Psoas muscle (tissue), 8 donors: ENCODE measurements at regions of chr9 and their contacts with region 1.

Region 1: DNA sequence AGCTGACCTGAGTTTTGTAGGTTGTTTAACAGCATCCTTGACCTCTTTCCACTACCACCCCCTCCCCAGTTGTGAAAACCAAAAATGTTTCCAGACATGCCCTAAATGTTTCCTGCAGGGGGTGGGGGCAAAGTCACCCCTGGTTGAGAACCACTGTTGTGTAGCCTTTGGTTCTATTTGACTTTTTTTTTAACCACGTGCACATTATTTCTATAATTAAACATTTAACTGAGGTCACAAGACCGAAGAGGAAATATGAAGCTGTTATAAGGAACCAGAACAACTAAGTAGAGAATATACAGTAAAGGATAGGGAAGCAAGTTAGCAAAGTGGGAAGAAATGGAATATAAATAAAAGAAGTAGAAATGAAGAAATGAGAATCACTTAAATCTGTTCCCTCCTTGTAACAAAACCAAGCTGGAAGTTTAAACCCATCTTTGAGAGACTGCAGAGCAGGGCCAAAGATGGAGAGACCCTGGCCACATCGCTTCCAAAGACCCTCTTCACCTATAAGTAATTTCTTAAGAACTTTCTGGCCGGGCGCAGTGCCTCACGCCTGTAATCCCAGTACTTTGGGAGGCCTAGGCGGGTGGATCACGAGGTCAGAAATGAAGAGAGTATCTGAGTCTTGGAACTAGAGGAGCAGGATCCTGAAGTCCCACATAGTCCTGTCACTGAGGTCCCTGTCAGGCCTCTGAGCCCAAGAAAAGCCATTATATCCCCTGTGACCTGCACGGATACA is 14.4 kb downstream of the SIT1 start:
- DNase-seq: no peak
- ATAC-seq: no peak
- H3K4me3 ChIP-seq: no peak overlapping the region
- H3K27ac ChIP-seq: peak overlapping the region; percentile 16
- H3K4me1 ChIP-seq: no peaks in the 10 kb centered on the region
- H3K27me3 ChIP-seq: no peaks in the 10 kb centered on the region
- CTCF ChIP-seq: no peak

Region 2: GRCh38 chr9:36298586-36298985 is 662.3 kb after region 1 on chr9:
- intact Hi-C with region 1: loop called in 1 of 2 experiments (anchors 10 kb)
- DNase-seq: no peak
- ATAC-seq: no peak
- H3K4me3 ChIP-seq: no peak overlapping the region
- H3K27ac ChIP-seq: no peak overlapping the region
- H3K4me1 ChIP-seq: no peaks in the 10 kb centered on the region
- H3K27me3 ChIP-seq: no peaks in the 10 kb centered on the region
- CTCF ChIP-seq: no peak